Activated CD4-positive, alpha-beta memory T cell treated with anti-CD3 and anti-CD28 coated beads, Interleukin-2, amount 10 ng/mL, durations not matched to agents 7 days and 5 days (primary cell): ENCODE measurements at regions of chr7 and their contacts with region 1.

Region 1: GRCh38 chr7:26193432-26194207 is 6.9 kb downstream of the HNRNPA2B1 start:
- DNase-seq: no peak
- H3K4me3 Mint-ChIP-seq: peak overlapping the region; percentile 64
- H3K27ac Mint-ChIP-seq: peak overlapping the region; percentile 75
- H3K4me1 Mint-ChIP-seq: peaks cover 81% of the 10 kb centered on the region
- H3K27me3 Mint-ChIP-seq: no peaks in the 10 kb centered on the region

Region 2: GRCh38 chr7:25758559-25758958 is 435.1 kb before region 1 on chr7:
- CTCF ChIA-PET with region 1: no interaction called
- POLR2A ChIA-PET with region 1: no interaction called
- DNase-seq: no peak
- H3K4me3 Mint-ChIP-seq: no peak overlapping the region
- H3K27ac Mint-ChIP-seq: no peak overlapping the region
- H3K4me1 Mint-ChIP-seq: no peaks in the 10 kb centered on the region
- H3K27me3 Mint-ChIP-seq: peaks cover 13% of the 10 kb centered on the region

Region 3: GRCh38 chr7:26284995-26285632 is 91.5 kb after region 1 on chr7:
- CTCF ChIA-PET with region 1: interaction called, 12 read pairs
- POLR2A ChIA-PET with region 1: interaction called, 46 read pairs
- DNase-seq: peak; percentile 26
- H3K4me3 Mint-ChIP-seq: no peak overlapping the region
- H3K27ac Mint-ChIP-seq: no peak overlapping the region
- H3K4me1 Mint-ChIP-seq: peaks cover 4% of the 10 kb centered on the region
- H3K27me3 Mint-ChIP-seq: peaks cover 7% of the 10 kb centered on the region

Region 4: DNA sequence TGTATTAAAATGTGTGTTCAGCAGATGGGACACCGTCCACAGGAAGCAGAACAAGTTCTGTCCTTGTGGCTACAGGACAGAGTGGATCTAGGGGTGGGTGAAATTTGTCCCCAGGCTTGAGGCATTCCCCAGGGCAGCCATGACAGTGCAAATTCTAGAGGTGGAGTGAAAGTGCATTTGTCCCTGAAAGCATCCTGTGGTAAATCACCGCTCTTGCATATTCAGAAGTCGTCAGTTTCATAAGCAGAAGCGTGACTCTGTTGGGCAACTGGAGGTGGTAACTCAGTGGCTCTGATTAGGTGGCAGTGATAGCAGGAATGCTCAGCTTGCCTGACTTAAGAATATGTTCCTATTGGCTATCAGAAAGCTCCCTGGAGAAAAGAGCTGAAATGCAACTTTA is 194.6 kb after region 1 on chr7:
- CTCF ChIA-PET with region 1: no interaction called
- POLR2A ChIA-PET with region 1: no interaction called
- DNase-seq: no peak
- H3K4me3 Mint-ChIP-seq: no peak overlapping the region
- H3K27ac Mint-ChIP-seq: no peak overlapping the region
- H3K4me1 Mint-ChIP-seq: peaks cover 7% of the 10 kb centered on the region
- H3K27me3 Mint-ChIP-seq: peaks cover 57% of the 10 kb centered on the region

Region 5: DNA sequence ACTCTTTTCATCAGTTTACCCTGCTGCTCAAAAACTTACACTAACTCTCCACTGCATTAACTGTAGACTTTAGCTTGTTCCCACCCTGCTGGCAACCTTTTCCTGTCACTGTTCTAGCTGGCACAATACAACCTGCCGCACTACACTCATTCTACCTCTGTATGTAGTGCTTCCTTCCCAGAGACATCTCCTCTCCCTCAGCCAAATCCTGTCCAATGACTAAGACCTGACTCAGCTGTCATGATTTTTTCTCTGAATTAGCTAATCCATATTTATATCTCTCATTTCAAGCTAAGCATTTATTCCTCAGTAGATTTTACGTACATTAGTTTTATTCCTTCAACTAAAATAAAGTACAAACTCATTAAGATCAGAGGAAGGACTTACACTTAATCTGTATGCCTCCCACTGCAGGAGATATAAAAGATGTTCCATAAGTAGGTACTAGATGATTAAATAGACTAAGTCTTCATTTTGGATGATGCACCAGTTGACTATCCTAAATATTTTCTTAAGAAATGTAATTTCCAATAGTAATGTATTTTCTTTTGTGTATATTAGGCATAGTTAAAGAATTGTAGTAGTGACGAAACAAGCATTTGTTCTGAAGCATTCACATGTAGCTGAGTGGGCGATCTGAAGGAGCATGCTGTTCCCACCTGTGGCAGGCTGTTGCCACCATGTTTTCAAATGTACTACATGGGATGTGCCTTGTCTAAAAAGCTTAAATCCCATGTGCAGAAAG is 481.7 kb after region 1 on chr7:
- CTCF ChIA-PET with region 1: no interaction called
- POLR2A ChIA-PET with region 1: no interaction called
- DNase-seq: no peak
- H3K4me3 Mint-ChIP-seq: no peak overlapping the region
- H3K27ac Mint-ChIP-seq: no peak overlapping the region
- H3K4me1 Mint-ChIP-seq: peaks cover 1% of the 10 kb centered on the region
- H3K27me3 Mint-ChIP-seq: peaks cover 13% of the 10 kb centered on the region